Heart left ventricle (tissue), 16 donors: ENCODE measurements at regions of chr11 and their contacts with region 1.

Region 1: DNA sequence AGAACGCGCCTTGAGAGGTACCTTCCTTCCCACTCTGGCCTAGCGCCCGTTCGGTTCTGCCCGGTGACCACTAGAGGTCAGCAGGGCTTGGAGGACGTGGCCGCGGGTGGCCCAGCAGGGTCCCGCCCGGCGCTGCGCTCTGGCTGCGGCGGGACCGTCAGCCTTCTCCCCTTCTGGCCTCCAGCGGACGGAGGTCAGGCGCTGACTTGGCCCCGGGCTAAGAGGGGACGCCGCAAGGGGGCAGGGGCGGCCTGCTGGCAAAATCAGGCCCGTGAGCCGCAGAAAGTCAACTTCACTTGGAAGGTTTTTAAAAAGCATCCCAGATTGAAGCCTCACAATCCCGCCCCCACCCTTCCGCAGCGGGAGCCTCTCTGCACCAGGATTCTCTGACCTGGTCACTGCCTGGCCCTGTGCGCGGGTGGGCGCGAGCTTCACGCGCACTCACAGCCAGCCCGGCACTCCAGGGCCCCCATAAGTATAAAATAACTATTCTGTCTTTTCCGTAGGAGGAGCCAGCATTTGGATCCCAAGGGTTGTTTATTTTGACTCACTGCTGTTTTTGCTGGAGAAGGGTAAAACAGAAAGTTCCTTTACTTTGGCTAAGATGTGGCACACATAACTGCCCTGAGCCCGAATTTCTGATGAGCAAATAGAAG is 23.2 kb upstream of the ZBTB16 start:
- DNase-seq: peak; percentile 83 to 93 (median 91)
- ATAC-seq: peak; percentile 84 to 96 (median 94)
- H3K4me3 ChIP-seq: peak overlapping the region in 10 of 12 donors; percentile 26 to 60 (median 48)
- H3K27ac ChIP-seq: peak overlapping the region in 10 of 12 donors; percentile 50 to 88 (median 75)
- H3K4me1 ChIP-seq: peaks cover 4 to 30% (median 11%) of the 10 kb centered on the region in 12 donors
- H3K27me3 ChIP-seq: no peaks in the 10 kb centered on the region
- CTCF ChIP-seq: peak; percentile 85 to 96 (median 94)
- POLR2A ChIP-seq: peak in 1 of 2 donors; percentile 39

Region 2: DNA sequence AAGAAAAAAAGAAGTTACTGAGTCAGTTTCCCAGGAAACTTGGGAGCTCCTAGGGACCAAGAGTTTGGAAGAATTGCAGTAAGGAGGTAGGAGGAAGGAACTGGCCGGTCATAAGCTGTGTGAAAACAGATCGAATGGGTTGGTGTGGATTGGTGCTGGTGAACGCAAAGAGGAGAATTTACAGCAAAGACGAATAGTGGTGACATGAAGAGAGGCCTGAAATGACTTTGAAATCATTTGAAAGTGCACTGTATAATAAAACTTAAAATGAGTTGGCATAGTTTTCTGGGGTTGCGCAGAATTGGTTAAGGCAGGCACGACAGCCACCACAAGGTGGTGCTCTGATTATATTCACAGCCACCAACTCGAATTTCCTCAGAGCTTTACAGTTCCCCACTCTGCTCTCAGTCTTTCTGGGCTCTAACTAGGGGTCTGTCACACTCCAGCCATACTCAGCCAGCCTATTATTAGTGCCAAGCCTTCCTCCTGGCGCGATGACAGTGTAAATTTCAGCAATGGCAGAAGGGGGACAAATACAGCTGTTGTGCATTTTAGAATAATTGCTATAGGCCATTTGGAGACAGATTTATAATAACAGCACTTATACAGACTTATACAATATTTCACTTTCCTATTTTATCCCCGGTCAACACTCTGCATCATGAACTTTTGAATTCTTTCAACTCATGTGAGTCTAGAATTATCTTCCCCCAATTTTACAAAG is 140.0 kb before region 1 on chr11:
- intact Hi-C with region 1: loop called in 2 of 10 experiments (anchors 5 to 10 kb)
- DNase-seq: peak in 2 of 5 donors; percentile 23 to 39
- ATAC-seq: peak; percentile 63 to 74 (median 70)
- H3K4me3 ChIP-seq: no peak overlapping the region
- H3K27ac ChIP-seq: no peak overlapping the region
- H3K4me1 ChIP-seq: peaks cover 0 to 15% (median 0%) of the 10 kb centered on the region in 12 donors
- H3K27me3 ChIP-seq: no peaks in the 10 kb centered on the region
- CTCF ChIP-seq: peak; percentile 55 to 81 (median 71)
- POLR2A ChIP-seq: no peak

Region 3: DNA sequence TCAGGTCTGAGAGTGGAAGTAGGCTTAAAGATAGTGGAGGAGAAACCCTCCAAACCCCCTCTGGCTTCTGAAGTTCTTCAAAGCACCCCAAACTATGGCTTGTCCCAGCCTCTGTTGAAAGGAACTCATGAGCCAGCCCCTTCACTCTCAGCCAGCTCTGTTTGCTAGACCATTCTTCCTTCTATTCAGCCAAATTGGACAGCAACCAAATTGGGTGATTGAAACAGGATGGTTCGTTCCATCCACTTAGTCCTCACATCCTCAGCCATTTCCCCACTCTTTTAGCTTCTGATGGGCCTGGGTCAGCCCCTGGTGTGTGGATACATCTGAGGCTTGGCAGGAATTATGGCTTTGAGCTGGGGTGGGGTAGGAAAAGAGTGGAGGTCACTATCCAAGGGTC is 56.9 kb before region 1 on chr11:
- intact Hi-C with region 1: no loop called
- DNase-seq: no peak
- ATAC-seq: no peak
- H3K4me3 ChIP-seq: no peak overlapping the region
- H3K27ac ChIP-seq: no peak overlapping the region
- H3K4me1 ChIP-seq: peaks cover 0 to 8% (median 5%) of the 10 kb centered on the region in 12 donors
- H3K27me3 ChIP-seq: peaks cover 0 to 44% (median 0%) of the 10 kb centered on the region in 9 donors
- CTCF ChIP-seq: no peak
- POLR2A ChIP-seq: no peak

Region 4: DNA sequence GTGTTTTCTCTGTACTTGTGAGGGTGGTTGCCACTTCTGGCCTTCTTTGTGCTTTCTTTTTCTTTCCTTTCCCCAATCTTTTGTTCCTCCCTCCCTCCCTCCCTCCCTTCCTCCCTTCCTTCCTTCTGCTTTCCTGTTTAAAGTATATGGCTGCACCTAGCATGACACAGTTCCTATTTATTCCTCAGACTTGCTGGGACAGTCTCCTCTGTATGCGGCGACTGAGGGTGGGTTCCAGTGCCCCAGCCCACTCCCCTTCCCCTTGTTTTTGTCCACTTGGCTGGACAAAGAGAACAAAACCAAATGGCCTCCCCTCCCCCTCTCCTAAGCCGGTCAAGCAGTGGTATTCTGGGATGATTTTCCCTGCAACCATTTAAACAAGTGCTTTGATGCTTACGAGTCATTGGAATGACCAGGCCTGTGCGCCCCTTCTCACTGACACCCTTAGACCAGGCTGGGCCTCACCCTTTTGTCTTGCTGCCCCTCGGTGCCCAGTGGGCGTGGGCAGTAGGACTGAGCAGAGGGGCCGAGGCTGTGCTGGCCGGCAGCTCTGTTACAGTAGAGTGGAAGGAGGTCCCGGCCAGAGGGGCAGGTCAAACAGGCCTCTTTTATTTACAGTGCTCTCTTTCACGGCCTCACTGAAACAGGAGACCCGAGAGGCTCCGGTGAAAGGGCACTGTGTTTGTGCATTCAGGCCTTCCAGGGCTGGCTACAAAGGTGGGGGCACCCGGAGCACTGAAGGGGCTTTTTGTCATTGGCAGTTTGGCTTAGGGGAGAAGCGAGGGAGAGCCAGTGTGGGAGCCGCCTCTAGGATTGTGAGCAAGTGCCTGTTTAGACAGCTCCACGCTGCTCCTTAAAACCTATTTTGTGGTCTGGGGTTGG is 55.5 kb after region 1 on chr11:
- intact Hi-C with region 1: loop called in 1 of 10 experiments (anchors 5 kb)
- DNase-seq: no peak
- ATAC-seq: peak in 2 of 4 donors; percentile 4 to 13
- H3K4me3 ChIP-seq: peak overlapping the region in 1 of 12 donors; percentile 1
- H3K27ac ChIP-seq: peak overlapping the region in 11 of 12 donors; percentile 20 to 76 (median 59)
- H3K4me1 ChIP-seq: peaks cover 26 to 100% (median 76%) of the 10 kb centered on the region in 12 donors
- H3K27me3 ChIP-seq: no peaks in the 10 kb centered on the region
- CTCF ChIP-seq: no peak
- POLR2A ChIP-seq: no peak

Region 5: DNA sequence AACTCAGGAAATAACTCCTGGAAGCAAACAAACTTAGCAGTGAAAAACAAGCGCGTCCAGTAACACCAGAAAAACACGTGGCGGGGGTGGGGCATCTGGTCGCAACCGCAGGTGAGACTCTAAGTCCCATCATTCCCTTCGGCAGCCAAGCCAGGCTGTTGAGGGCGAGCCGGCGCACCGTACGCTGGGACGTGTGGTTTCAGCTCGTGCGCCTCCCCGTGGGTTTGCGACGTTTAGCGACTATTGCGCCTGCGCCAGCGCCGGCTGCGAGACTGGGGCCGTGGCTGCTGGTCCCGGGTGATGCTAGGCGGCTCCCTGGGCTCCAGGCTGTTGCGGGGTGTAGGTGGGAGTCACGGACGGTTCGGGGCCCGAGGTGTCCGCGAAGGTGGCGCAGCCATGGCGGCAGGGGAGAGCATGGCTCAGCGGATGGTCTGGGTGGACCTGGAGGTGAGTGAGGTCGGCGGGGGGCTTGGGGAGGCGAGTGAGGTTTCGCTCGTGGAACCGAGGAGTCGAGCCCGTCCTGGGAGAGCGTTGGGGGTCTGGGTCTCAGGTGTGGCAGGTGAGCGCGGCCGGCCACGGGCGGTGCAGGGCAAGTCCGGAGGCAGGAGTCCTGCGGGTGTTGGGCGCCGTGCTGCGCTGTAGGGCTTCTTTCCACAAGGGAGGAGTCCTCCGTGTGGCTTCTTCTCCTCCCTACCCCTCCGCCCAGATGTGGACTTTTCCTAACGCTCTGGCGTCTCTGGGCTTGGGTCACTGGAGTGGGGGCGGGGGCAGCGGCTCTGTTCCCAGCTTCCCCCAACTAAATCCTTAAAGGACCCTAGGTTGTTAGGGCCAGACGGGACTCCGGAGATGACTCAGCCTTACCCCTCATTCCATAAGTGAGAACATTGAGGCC is 403.2 kb after region 1 on chr11 and contains the start of gene REXO2:
- intact Hi-C with region 1: loop called in 1 of 10 experiments (anchors 10 kb)
- DNase-seq: peak; percentile 95 to 98 (median 97)
- ATAC-seq: peak; percentile 98 to 99 (median 98)
- H3K4me3 ChIP-seq: peak within 1 kb of the TSS; percentile 66 to 96 (median 88)
- H3K27ac ChIP-seq: peak within 1 kb of the TSS; percentile 35 to 95 (median 88)
- H3K4me1 ChIP-seq: peaks cover 0 to 43% (median 21%) of the 10 kb centered on the region in 12 donors
- H3K27me3 ChIP-seq: no peaks in the 10 kb centered on the region
- CTCF ChIP-seq: peak in 8 of 12 donors; percentile 9 to 62 (median 28)
- POLR2A ChIP-seq: peak in 1 of 2 donors; percentile 85
- total RNA-seq, gene REXO2: 158 to 235 (median 195) TPM

Region 6: DNA sequence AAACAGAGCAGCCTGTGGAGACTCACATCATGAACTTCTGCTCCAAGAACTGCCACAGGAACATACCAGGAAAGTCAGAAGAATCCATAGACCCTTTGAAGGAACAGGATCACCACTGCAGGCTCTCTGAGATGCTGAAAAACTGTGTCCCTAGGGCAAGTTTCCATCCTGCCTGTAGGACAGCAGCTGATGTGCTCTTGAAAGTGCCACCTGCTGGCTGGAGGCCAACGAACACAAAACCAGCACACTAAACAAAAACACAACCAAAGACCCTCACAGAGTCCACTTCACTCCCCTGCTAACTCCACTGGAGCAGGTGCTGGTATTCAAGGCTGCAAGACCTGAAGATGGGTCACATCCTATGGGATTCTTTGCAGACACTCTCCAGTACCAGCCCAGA is 535.4 kb after region 1 on chr11:
- intact Hi-C with region 1: no loop called
- DNase-seq: no peak
- ATAC-seq: no peak
- H3K4me3 ChIP-seq: no peak overlapping the region
- H3K27ac ChIP-seq: no peak overlapping the region
- H3K4me1 ChIP-seq: no peaks in the 10 kb centered on the region
- H3K27me3 ChIP-seq: no peaks in the 10 kb centered on the region
- CTCF ChIP-seq: no peak
- POLR2A ChIP-seq: no peak

Region 7: GRCh38 chr11:115409691-115410220 is 1373.5 kb after region 1 on chr11:
- intact Hi-C with region 1: loop called in 1 of 10 experiments (anchors 5 kb)
- DNase-seq: no peak
- ATAC-seq: no peak
- H3K4me3 ChIP-seq: no peak overlapping the region
- H3K27ac ChIP-seq: no peak overlapping the region
- H3K4me1 ChIP-seq: peaks cover 0 to 26% (median 0%) of the 10 kb centered on the region in 12 donors
- H3K27me3 ChIP-seq: no peaks in the 10 kb centered on the region
- CTCF ChIP-seq: no peak
- POLR2A ChIP-seq: no peak